Calu3 (cell line): ENCODE measurements at regions of chr15 and their contacts with region 1.

Region 1: GRCh38 chr15:81893182-81893835 is 152.5 kb downstream of the MEX3B start:
- DNase-seq: no peak
- H3K4me3 Mint-ChIP-seq: no peak overlapping the region
- H3K27ac Mint-ChIP-seq: no peak overlapping the region
- H3K4me1 Mint-ChIP-seq: no peaks in the 10 kb centered on the region
- H3K27me3 Mint-ChIP-seq: no peaks in the 10 kb centered on the region
- CTCF ChIP-seq: no peak

Region 2: GRCh38 chr15:81930649-81931364 is 37.5 kb after region 1 on chr15:
- CTCF ChIA-PET with region 1: no interaction called
- intact Hi-C with region 1: loop called (anchors 5 kb)
- DNase-seq: no peak
- H3K4me3 Mint-ChIP-seq: no peak overlapping the region
- H3K27ac Mint-ChIP-seq: no peak overlapping the region
- H3K4me1 Mint-ChIP-seq: no peaks in the 10 kb centered on the region
- H3K27me3 Mint-ChIP-seq: no peaks in the 10 kb centered on the region
- CTCF ChIP-seq: no peak